Transverse colon (tissue), 4 donors: ENCODE measurements at regions of chr5 and their contacts with region 1.

Region 1: GRCh38 chr5:41863871-41864486 is 6.2 kb downstream of the OXCT1 start:
- DNase-seq: no peak
- H3K4me3 ChIP-seq: no peak overlapping the region
- H3K27ac ChIP-seq: no peak overlapping the region
- H3K4me1 ChIP-seq: peaks cover 0 to 4% (median 3%) of the 10 kb centered on the region in 4 donors
- H3K27me3 ChIP-seq: no peaks in the 10 kb centered on the region
- CTCF ChIP-seq: no peak
- EP300 ChIP-seq: no peak
- POLR2A ChIP-seq: no peak

Region 2: DNA sequence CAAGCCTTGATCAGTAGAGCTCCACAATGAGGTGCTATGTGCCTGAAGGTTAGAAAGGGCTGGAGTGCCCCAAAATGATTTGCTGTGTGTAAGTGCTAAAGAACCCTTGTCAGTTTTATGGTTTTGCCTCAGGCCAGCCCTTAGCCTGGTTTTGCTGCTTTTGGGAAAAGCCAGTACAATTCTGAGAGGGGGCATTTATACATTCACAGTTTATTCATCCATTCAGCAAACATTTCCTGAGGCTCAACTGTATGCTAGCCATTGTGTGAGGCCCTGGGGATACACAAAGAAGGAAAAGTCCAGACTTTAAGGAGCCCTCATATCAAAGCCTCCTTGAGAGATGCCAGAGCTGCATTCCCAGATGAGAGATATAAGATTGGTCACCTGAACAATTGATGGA is 238.4 kb before region 1 on chr5:
- in situ Hi-C with region 1: no loop called
- intact Hi-C with region 1: no loop called
- DNase-seq: no peak
- H3K4me3 ChIP-seq: no peak overlapping the region
- H3K27ac ChIP-seq: no peak overlapping the region
- H3K4me1 ChIP-seq: no peaks in the 10 kb centered on the region
- H3K27me3 ChIP-seq: no peaks in the 10 kb centered on the region
- CTCF ChIP-seq: no peak
- EP300 ChIP-seq: no peak
- POLR2A ChIP-seq: no peak

Region 3: GRCh38 chr5:42043400-42043799 is 179.4 kb after region 1 on chr5:
- in situ Hi-C with region 1: loop called in 1 of 4 experiments (anchors 5 kb)
- intact Hi-C with region 1: no loop called
- DNase-seq: no peak
- H3K4me3 ChIP-seq: no peak overlapping the region
- H3K27ac ChIP-seq: no peak overlapping the region
- H3K4me1 ChIP-seq: no peaks in the 10 kb centered on the region
- H3K27me3 ChIP-seq: no peaks in the 10 kb centered on the region
- CTCF ChIP-seq: no peak
- EP300 ChIP-seq: no peak
- POLR2A ChIP-seq: no peak

Region 4: DNA sequence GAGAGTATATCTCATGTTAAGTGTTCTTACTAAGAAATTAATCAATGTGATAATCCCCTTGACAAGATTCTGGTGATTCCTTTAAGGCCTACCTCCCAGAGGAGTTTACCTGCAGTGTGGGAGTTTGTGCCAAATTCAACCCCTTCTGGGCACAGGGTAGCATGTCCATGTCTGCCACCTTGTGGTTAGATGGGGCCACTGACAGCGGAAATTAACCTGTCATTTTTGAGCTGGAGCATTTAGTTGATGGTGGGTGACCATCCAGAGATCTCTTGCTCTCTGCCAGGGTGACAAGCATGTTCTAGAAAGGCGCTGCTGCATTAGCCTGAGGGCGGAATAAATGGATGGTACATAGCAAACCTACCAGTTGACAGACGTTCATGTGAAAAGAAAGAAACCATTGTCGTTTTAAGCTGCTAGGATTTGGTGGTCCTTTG is 193.3 kb after region 1 on chr5:
- in situ Hi-C with region 1: loop called in 2 of 4 experiments (anchors 5 kb)
- intact Hi-C with region 1: no loop called
- DNase-seq: peak; percentile 33
- H3K4me3 ChIP-seq: no peak overlapping the region
- H3K27ac ChIP-seq: no peak overlapping the region
- H3K4me1 ChIP-seq: no peaks in the 10 kb centered on the region
- H3K27me3 ChIP-seq: no peaks in the 10 kb centered on the region
- CTCF ChIP-seq: peak; percentile 51 to 63 (median 60)
- EP300 ChIP-seq: no peak
- POLR2A ChIP-seq: no peak